ENCODE measurements at regions of chr11 and their contacts with region 1.

Region 1: DNA sequence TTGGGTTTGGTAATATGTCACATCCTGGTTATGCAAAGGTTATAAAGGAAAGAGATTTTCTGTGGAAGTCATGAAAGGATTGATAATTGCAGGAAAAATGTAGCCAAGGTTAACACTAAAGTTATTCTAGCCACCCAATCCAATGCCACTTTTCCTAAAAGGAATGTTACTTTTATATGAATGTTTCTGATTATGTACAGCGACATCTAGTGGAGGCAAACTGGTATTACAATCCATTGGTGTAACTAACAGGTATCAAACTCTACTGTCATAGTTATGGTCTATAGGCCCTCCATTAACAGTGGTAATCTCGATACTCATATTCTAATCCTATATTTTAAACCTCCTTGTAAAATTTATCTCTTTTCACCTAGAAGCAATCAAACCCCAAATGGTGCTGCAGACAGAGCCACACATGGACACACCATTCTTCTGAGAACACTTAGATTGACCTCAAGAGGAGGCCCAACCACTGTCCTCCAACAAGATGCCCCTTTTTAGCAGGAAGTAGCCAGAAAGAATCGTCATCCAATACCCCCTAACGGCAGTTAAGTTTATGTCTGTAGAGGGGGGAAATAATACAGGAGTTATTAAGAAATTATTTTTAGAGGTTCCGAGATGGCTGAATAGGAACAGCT is 74.9 kb upstream of the RAG2 start:
- DNase-seq: peak; percentile 62
- H3K4me3 Mint-ChIP-seq: no peak overlapping the region
- H3K27ac Mint-ChIP-seq: no peak overlapping the region
- H3K4me1 Mint-ChIP-seq: no peaks in the 10 kb centered on the region
- H3K27me3 Mint-ChIP-seq: no peaks in the 10 kb centered on the region
- CTCF ChIP-seq: peak; percentile 57

Region 2: DNA sequence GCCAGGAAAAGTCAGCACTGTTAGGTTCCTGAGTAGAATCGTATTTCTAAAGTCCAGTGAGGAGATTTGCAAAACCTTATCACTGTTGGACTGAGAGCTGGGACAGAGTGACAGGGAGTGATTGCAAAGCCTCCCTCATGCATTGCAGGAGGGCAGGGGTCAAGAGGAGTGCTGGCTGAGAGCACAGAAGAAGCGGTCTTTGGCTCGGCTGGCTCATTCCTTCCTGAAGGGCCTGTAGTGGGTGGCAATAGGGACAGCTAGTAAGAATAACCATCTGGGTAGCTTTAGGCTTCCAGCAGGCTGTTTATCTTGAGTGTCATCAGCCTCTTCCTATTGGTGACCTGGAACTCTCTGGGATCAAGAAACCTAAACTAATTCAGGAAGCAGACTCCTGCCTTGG is 1480.6 kb before region 1 on chr11:
- CTCF ChIA-PET with region 1: no interaction called
- POLR2A ChIA-PET with region 1: no interaction called
- intact Hi-C with region 1: no loop called
- DNase-seq: no peak
- H3K4me3 Mint-ChIP-seq: no peak overlapping the region
- H3K27ac Mint-ChIP-seq: peak overlapping the region; percentile 57
- H3K4me1 Mint-ChIP-seq: peaks cover 5% of the 10 kb centered on the region
- H3K27me3 Mint-ChIP-seq: no peaks in the 10 kb centered on the region
- CTCF ChIP-seq: no peak

Region 3: GRCh38 chr11:36657610-36658267 is 15.2 kb before region 1 on chr11:
- CTCF ChIA-PET with region 1: interaction called, 10 read pairs
- POLR2A ChIA-PET with region 1: no interaction called
- intact Hi-C with region 1: no loop called
- DNase-seq: no peak
- H3K4me3 Mint-ChIP-seq: no peak overlapping the region
- H3K27ac Mint-ChIP-seq: no peak overlapping the region
- H3K4me1 Mint-ChIP-seq: no peaks in the 10 kb centered on the region
- H3K27me3 Mint-ChIP-seq: no peaks in the 10 kb centered on the region
- CTCF ChIP-seq: no peak

Region 4: DNA sequence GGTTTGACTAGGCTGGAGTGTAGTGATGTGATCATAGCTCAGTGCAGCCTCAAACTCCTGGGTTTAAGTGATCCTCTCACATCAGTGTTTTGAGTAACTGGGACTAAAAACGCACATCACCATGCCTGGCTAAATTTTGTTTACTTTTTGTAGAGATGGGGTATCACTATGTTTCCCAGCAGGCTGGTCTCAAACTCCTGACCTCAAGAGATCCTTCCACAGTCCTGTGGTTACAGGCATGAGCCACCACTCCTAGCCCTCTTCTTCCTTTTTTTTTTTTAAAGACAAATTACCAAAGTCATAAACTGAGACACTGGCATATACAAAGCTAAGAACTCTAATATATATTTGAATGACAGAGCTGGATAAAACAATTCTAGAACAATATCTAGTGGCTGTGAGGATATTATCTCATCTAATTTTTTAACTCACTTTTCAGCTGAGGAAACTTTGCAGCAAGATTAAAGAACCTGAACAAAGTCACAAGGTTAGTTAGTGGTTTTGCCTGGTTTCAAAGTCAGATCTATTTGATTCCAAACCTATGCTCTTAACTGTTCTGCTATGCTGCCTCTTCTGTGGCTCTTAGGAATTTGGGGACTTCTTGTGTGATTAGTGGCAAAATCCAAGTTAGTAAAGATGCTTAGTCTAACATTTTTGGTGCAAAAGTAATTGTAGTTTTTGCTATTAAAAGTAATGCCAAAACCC is 20.4 kb after region 1 on chr11:
- CTCF ChIA-PET with region 1: interaction called, 26 read pairs
- POLR2A ChIA-PET with region 1: no interaction called
- intact Hi-C with region 1: no loop called
- DNase-seq: no peak
- H3K4me3 Mint-ChIP-seq: no peak overlapping the region
- H3K27ac Mint-ChIP-seq: no peak overlapping the region
- H3K4me1 Mint-ChIP-seq: no peaks in the 10 kb centered on the region
- H3K27me3 Mint-ChIP-seq: no peaks in the 10 kb centered on the region
- CTCF ChIP-seq: no peak

Measured in MCF 10A (cell line).